GM18951 (cell line): ENCODE measurements at regions of chr19 and their contacts with region 1.

Region 1: DNA sequence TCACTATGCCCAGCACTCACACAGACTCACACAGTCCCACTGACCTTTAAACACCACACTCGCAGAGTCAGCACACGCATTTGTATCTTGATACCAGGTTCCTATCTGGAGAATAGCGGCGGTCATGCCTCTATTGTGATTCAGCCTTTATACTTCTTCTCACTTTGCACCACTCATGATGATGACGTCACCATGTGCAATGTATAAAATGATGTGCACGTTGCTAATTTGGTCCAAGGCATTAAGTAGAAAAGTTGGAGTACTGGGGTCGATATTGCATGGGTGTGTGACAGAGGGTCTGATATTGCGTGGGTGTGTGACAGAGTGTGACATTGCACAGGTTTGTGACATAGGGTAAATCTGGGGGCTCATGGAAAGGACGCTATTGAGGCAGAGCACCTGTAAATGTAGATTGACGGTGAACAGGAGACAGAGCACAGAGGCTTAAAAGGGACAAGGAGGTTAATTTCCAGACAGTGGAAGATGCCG is 4.5 kb upstream of the VN1R4 start:
- POLR2A ChIP-seq: no peak

Region 2: DNA sequence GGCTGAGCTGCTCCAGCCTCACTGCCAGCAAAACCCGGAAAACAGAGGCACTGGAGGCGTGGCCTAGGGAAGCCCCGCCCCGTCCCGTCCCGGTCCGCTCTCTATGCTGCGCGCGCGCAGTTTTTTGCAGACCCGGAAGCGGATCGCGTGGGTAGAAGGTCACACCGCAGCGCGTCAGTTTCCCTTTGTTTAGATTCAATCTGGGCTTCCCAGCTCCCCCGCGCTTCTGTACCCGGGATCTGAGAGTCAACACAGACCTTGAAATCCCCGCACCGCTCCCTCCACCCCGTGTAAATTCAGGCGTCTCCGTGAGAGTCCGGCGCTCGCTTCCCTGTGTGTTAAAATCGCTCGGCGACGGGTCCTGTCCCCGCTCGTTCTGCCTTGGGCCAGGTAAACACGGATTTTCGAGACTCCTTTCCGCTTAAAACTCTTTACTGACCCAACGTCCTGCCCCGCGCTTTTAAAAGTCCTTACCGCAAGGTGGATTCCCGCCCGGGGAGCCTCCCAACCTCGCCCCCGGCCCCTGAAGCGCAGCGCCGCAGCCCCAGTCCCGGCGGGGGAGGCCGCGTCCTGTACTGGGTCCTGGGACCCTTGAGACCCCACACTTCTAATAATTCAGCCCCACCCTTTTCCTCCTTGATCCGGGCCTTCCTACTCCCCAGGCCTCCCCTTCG is 935.7 kb before region 1 on chr19 and contains the start of gene ZNF610:
- in situ Hi-C with region 1: loop called (anchors 10 kb)
- POLR2A ChIP-seq: peak; percentile 43

Region 3: GRCh38 chr19:53394974-53395839 is 123.2 kb after region 1 on chr19 and contains the start of gene ZNF765:
- in situ Hi-C with region 1: no loop called
- POLR2A ChIP-seq: peak; percentile 81